ENCODE measurements at regions of chr17 and their contacts with region 1.

Region 1: GRCh38 chr17:7296189-7296902 is 1.9 kb upstream of the YBX2 start:
- DNase-seq: peak; percentile 86 to 89
- ATAC-seq: peak; percentile 81 to 87
- H3K4me3 ChIP-seq: no peak overlapping the region; the same call in 2 of the 3 replicates
- H3K27ac ChIP-seq: peak overlapping the region; percentile 39 to 82; a peak in 5 of 6 replicates
- H3K4me1 ChIP-seq: peaks cover 22% of the 10 kb centered on the region; the same call in 2 of the 3 replicates
- CTCF ChIP-seq: peak; percentile 99
- EP300 ChIP-seq: no peak
- POLR2A ChIP-seq: no peak
- RAD21 ChIP-seq: peak; percentile 94 to 99

Region 2: DNA sequence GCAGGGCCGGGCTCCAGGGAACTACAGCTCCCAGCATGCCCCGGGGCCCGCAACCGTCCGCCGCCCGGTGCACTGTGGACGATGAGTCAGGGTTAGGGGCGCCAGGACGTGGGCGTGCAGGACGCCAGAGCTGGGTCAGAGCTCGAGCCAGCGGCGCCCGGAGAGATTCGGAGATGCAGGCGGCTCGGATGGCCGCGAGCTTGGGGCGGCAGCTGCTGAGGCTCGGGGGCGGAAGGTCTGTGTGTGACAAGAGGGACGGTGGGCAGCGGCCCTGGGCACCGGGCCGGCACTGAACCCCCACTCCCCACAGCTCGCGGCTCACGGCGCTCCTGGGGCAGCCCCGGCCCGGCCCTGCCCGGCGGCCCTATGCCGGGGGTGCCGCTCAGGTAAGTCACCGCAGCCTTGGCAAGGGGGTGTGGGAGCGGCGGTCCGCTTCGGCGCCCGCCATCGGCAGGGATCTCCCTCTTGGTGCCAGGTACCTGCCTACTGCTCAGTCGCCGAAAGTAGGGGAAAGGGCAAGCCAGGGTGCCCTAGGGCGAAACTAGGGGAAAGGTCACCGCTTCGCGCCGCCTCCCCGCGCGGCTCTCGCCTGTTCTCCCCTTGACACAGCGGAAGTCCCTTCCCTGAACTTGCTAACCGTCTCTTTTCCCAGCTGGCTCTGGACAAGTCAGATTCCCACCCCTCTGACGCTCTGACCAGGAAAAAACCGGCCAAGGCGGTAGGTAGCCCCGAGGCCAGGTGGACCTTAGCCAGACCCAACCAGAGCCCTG is 76.3 kb before region 1 on chr17 and contains the starts of genes ACADVL and DLG4:
- CTCF ChIA-PET with region 1: interaction called, 72 read pairs
- POLR2A ChIA-PET with region 1: interaction called, 3 read pairs
- DNase-seq: peak; percentile 82 to 96
- ATAC-seq: peak; percentile 54 to 82
- H3K4me3 ChIP-seq: peak within 1 kb of the TSS; percentile 74
- H3K27ac ChIP-seq: peak within 1 kb of the TSS; percentile 88 to 98
- H3K4me1 ChIP-seq: peaks cover 51% of the 10 kb centered on the region
- CTCF ChIP-seq: no peak
- EP300 ChIP-seq: no peak
- POLR2A ChIP-seq: peak; percentile 88
- RAD21 ChIP-seq: no peak
- polyA plus RNA-seq, gene ACADVL: 238 and 288 TPM in 2 replicates
- polyA plus RNA-seq, gene DLG4: 8.3 and 9.2 TPM in 2 replicates

Region 3: DNA sequence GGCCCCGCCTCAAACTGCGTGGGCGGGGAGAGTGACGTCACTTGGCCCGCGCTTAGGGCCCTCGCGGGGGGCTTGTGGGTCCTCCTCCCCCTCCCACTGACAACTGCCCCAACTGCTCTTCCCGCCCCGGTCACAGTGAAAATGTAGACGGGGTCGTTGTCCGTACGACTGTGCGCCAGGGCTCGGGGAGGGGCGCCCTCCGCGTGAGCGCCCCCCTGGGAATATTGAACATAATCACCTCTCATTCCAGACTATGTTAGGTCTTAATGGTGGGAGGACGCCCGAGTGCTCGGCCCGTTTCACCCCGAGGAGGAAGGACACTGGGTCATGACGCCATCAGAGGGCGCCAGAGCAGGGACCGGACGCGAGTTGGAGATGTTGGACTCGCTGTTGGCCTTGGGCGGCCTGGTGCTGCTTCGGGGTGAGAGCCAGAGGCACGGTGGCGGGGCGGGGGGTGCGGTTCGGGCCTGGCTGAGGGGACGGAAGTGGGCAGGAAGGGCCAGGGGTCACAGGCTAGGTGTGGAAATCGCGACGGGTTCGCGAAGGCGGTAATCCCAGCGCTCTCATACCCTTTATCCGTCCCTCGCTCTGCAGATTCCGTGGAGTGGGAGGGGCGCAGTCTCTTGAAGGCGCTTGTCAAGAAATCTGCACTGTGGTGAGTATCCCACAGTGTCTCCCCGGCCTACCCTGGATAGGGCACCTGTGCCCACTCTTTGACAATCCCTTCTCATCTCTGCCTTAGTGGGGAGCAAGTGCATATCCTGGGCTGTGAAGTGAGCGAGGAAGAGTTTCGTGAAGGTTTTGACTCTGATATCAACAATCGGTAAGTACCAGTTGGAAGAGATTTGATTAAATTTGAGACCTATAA is 43.9 kb before region 1 on chr17 and contains the start of gene ELP5:
- CTCF ChIA-PET with region 1: interaction called, 42 read pairs
- POLR2A ChIA-PET with region 1: no interaction called
- DNase-seq: peak; percentile 97 to 98
- ATAC-seq: peak; percentile 85 to 86
- H3K4me3 ChIP-seq: peak within 1 kb of the TSS; percentile 99
- H3K27ac ChIP-seq: peak within 1 kb of the TSS; percentile 96 to 99
- H3K4me1 ChIP-seq: peaks cover 28% of the 10 kb centered on the region
- CTCF ChIP-seq: peak; percentile 54
- EP300 ChIP-seq: no peak
- POLR2A ChIP-seq: peak; percentile 90
- RAD21 ChIP-seq: peak; percentile 31 to 56; a peak in 4 of 5 replicates
- polyA plus RNA-seq, gene ELP5: 114 and 133 TPM in 2 replicates

Region 4: DNA sequence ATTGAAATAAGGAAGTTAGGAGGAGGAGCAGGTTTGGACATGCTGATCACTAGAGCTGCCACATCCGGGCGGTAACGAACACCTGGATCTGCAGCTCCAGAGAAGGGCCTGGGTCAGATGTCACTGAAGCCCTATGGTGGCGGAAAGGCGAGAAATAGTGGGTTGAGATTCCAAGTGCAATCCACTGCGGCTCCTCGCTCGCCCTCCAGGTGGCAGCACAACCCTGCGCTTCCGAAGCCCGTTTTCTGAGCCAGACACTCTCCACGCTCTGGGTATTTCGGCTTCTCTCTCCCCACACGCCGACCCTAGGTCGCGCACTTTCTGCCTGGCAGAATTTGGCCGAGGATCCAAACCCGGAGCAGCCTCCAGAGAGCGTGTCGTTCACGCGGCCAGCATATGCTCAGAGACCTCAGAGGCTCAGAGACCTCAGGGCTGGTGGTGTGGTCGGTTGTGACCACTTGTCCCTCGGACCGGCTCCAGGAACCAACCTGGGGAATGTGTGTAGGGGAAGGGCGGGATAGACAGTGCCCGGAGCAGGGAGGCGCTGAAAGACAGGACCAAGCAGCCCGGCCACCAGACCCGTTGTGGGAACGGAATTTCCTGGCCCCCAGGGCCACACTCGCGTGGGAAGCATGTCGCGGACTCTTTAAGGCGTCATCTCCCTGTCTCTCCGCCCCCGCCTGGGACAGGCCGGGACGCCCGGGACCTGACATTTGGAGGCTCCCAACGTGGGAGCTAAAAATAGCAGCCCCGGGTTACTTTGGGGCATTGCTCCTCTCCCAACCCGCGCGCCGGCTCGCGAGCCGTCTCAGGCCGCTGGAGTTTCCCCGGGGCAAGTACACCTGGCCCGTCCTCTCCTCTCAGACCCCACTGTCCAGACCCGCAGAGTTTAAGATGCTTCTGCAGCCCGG is 15.6 kb before region 1 on chr17:
- CTCF ChIA-PET with region 1: interaction called, 446 read pairs
- POLR2A ChIA-PET with region 1: interaction called, 5 read pairs
- DNase-seq: peak; percentile 90 to 96
- ATAC-seq: peak; percentile 80 to 88
- H3K4me3 ChIP-seq: peak overlapping the region; percentile 46
- H3K27ac ChIP-seq: peak overlapping the region; percentile 47 to 74
- H3K4me1 ChIP-seq: peaks cover 11% of the 10 kb centered on the region
- CTCF ChIP-seq: peak; percentile 97
- EP300 ChIP-seq: no peak
- POLR2A ChIP-seq: no peak
- RAD21 ChIP-seq: peak; percentile 99 to 100

Region 5: GRCh38 chr17:7314719-7315569 is 18.6 kb after region 1 on chr17 and contains the start of gene GPS2:
- CTCF ChIA-PET with region 1: interaction called, 58 read pairs
- POLR2A ChIA-PET with region 1: no interaction called
- DNase-seq: peak; percentile 93 to 95
- ATAC-seq: peak; percentile 77 to 82
- H3K4me3 ChIP-seq: peak within 1 kb of the TSS; percentile 75
- H3K27ac ChIP-seq: peak within 1 kb of the TSS; percentile 88 to 95
- H3K4me1 ChIP-seq: peaks cover 47% of the 10 kb centered on the region
- CTCF ChIP-seq: no peak
- EP300 ChIP-seq: peak in 1 of 2 experiments; percentile 6; a peak in 1 of 5 replicates
- POLR2A ChIP-seq: peak; percentile 82
- RAD21 ChIP-seq: no peak; a peak in 2 of 5 replicates
- polyA plus RNA-seq, gene GPS2: 48.5 and 61.7 TPM in 2 replicates

Region 6: DNA sequence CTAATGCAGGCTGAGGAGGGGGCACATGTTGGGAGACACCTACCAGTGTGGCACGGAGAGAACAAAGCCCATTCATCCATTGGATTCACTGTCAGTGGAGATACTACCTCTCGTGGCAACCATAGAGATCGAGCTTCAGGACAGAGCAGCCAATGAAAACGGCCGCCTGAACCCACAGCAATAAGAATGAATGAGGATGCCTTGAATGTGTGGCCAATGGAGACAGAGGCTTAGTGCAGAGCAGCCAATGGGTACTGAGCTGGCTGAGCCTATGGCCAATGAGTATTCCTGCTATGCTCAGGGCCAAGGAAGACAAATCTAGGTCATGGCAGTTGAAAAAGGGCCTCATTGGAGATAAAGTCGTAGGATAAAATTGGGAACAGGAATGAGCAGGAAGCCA is 1024.6 kb after region 1 on chr17:
- CTCF ChIA-PET with region 1: no interaction called
- POLR2A ChIA-PET with region 1: no interaction called
- DNase-seq: peak in 1 of 2 experiments; percentile 59
- ATAC-seq: peak in 1 of 2 experiments; percentile 66; a peak in 3 of 6 replicates
- H3K4me3 ChIP-seq: no peak overlapping the region
- H3K27ac ChIP-seq: no peak overlapping the region
- H3K4me1 ChIP-seq: no peaks in the 10 kb centered on the region
- CTCF ChIP-seq: no peak
- EP300 ChIP-seq: no peak
- POLR2A ChIP-seq: no peak
- RAD21 ChIP-seq: no peak